Activated CD4-positive, alpha-beta T cell treated with anti-CD3 and anti-CD28 coated beads for 36 hours (primary cell): ENCODE measurements at regions of chr10 and their contacts with region 1.

Region 1: DNA sequence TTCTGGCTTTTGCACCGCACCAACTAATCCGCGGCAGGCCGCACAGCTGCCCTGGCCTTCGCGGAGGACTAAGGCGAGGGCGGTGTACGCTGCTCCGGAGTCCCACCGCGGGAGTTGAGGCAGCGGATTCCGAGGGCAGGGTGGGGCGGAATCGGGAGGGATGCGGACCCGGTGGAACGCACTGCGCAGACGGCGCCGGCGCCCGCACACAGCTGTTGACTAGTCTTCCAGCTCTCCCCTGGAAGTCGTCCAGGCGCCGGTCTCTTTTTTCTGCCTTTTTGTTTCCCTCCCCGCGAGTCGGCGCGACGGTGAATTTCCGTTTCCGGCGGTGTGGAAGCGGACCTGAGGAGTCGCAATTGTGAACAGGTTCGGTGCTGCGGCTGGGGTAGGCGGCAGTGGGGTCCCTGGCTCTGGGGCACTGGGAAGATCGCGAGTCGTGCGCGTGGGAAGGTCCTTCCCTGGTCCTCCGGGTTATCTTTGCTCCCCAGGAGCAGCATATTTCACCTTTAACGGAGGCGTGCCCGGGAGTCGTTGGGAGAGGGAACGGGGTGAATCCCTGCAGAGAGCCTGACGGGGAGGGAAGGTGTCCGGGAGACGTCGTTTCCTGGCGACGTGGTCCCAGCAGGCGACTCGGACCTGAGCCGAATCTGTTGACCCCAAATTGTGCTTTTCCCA is at the start of gene ASAH2B:
- DNase-seq: peak; percentile 88
- ATAC-seq: peak; percentile 87
- H3K4me3 Mint-ChIP-seq: peak within 1 kb of the TSS; percentile 99
- H3K27ac Mint-ChIP-seq: peak within 1 kb of the TSS; percentile 97
- H3K4me1 Mint-ChIP-seq: peaks cover 15% of the 10 kb centered on the region
- H3K27me3 Mint-ChIP-seq: peaks cover 1% of the 10 kb centered on the region
- total RNA-seq, gene ASAH2B: 5.9 to 10.3 TPM

Region 2: DNA sequence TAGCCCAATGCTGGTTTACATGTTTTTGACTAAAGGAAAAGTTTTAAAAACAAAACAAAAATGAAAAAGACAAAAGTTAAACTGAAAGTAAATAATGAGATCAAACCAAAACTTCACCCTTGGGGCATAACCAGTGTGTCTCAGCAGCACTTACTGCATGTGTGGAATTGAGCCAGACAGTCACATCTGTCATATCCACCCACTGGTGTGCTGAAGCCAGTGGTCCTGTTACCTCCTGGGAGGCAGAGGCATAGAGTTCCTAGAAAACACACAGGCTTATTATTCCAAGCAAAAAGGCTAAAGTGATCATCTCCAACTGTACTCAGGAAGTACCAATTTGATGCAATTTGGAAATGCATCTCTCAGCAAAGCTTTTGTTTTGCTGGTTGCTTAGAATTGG is 528.9 kb before region 1 on chr10:
- CTCF ChIA-PET with region 1: no interaction called
- POLR2A ChIA-PET with region 1: no interaction called
- intact Hi-C with region 1: no loop called
- DNase-seq: no peak
- ATAC-seq: no peak
- H3K4me3 Mint-ChIP-seq: no peak overlapping the region
- H3K27ac Mint-ChIP-seq: no peak overlapping the region
- H3K4me1 Mint-ChIP-seq: no peaks in the 10 kb centered on the region
- H3K27me3 Mint-ChIP-seq: peaks cover 14% of the 10 kb centered on the region

Region 3: GRCh38 chr10:50260791-50261281 is 478.9 kb before region 1 on chr10:
- CTCF ChIA-PET with region 1: no interaction called
- POLR2A ChIA-PET with region 1: no interaction called
- intact Hi-C with region 1: no loop called
- DNase-seq: peak; percentile 18
- ATAC-seq: peak; percentile 94
- H3K4me3 Mint-ChIP-seq: no peak overlapping the region
- H3K27ac Mint-ChIP-seq: no peak overlapping the region
- H3K4me1 Mint-ChIP-seq: peaks cover 6% of the 10 kb centered on the region
- H3K27me3 Mint-ChIP-seq: peaks cover 23% of the 10 kb centered on the region

Region 4: GRCh38 chr10:50653142-50653541 is 86.6 kb before region 1 on chr10:
- CTCF ChIA-PET with region 1: no interaction called
- POLR2A ChIA-PET with region 1: no interaction called
- intact Hi-C with region 1: loop called in 1 of 2 experiments (anchors 5 kb)
- DNase-seq: peak; percentile 35
- ATAC-seq: peak; percentile 65
- H3K4me3 Mint-ChIP-seq: no peak overlapping the region
- H3K27ac Mint-ChIP-seq: no peak overlapping the region
- H3K4me1 Mint-ChIP-seq: peaks cover 13% of the 10 kb centered on the region
- H3K27me3 Mint-ChIP-seq: no peaks in the 10 kb centered on the region

Region 5: DNA sequence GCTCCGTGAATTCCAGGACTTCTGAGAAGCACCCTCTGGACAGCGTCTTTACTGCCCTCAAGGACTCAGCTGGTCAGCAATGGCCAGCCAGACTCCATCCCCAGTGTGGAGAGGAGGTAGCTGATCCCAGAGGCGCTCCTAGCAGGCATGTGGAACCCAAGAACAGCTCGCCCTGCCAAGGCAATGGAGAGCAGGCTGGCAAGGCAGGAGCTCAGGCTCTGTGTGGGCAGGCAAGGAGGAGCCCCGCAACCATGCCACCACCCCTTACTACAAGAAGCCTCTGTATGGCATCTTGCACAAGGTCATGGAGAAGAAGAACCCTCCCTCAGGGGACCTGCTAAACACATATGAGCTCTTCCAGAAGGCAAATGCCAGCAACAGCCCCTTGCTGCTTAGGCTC is 81.6 kb before region 1 on chr10:
- CTCF ChIA-PET with region 1: interaction called, 3 read pairs
- POLR2A ChIA-PET with region 1: no interaction called
- intact Hi-C with region 1: loop called in 1 of 2 experiments (anchors 1 kb)
- DNase-seq: no peak
- ATAC-seq: no peak
- H3K4me3 Mint-ChIP-seq: peak overlapping the region; percentile 15
- H3K27ac Mint-ChIP-seq: no peak overlapping the region
- H3K4me1 Mint-ChIP-seq: peaks cover 29% of the 10 kb centered on the region
- H3K27me3 Mint-ChIP-seq: no peaks in the 10 kb centered on the region

Region 6: GRCh38 chr10:50824782-50825181 is 85.0 kb after region 1 on chr10:
- CTCF ChIA-PET with region 1: no interaction called
- POLR2A ChIA-PET with region 1: no interaction called
- intact Hi-C with region 1: no loop called
- DNase-seq: no peak
- ATAC-seq: no peak
- H3K4me3 Mint-ChIP-seq: no peak overlapping the region
- H3K27ac Mint-ChIP-seq: no peak overlapping the region
- H3K4me1 Mint-ChIP-seq: no peaks in the 10 kb centered on the region
- H3K27me3 Mint-ChIP-seq: peaks cover 18% of the 10 kb centered on the region

Region 7: DNA sequence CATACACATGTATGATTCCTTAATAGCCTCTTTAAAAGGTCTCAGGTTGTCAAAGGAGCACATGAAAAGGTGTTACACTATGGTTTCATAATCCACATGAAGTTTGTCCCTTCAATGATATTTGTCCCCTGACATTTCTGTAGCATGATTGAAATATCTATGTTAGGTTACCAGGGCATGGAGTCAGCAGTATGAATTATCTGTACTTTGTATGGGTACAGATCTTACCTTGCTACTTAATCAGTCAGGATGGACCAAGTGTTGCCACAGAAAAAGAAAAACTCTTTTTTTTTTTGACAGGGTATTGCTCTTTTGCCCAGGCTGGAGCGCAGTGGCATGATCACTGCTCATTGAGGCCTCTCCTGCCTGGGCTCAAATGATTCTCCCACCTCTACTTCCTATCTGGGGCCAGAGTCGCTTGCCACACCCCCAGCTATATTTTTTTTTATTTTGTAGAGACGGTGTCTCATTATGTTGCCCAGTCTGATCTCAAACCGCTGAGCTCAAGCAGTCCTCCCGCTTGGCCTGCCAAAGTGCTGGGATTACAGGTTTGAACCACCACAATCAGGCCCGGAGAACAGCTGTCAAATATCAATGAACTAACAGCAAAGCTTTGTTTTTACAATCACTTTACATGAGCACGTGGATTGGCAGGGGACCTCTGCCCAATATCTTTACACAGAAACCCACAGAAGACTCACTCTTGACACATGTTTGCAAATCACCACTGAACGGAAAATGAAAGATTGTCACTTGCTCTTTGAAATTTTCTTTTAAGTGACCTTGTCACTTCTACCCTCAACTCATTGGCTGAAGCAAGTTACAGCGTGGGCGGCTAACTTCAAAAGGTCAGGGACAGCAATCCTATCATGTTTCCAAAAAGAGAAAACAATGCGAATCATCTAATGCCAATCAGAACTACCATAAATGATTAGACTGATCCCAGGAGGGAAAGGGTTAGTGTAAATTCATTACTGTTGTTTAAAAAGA is 474.7 kb after region 1 on chr10:
- CTCF ChIA-PET with region 1: no interaction called
- POLR2A ChIA-PET with region 1: no interaction called
- intact Hi-C with region 1: no loop called
- DNase-seq: no peak
- ATAC-seq: no peak
- H3K4me3 Mint-ChIP-seq: no peak overlapping the region
- H3K27ac Mint-ChIP-seq: no peak overlapping the region
- H3K4me1 Mint-ChIP-seq: no peaks in the 10 kb centered on the region
- H3K27me3 Mint-ChIP-seq: no peaks in the 10 kb centered on the region

Region 8: DNA sequence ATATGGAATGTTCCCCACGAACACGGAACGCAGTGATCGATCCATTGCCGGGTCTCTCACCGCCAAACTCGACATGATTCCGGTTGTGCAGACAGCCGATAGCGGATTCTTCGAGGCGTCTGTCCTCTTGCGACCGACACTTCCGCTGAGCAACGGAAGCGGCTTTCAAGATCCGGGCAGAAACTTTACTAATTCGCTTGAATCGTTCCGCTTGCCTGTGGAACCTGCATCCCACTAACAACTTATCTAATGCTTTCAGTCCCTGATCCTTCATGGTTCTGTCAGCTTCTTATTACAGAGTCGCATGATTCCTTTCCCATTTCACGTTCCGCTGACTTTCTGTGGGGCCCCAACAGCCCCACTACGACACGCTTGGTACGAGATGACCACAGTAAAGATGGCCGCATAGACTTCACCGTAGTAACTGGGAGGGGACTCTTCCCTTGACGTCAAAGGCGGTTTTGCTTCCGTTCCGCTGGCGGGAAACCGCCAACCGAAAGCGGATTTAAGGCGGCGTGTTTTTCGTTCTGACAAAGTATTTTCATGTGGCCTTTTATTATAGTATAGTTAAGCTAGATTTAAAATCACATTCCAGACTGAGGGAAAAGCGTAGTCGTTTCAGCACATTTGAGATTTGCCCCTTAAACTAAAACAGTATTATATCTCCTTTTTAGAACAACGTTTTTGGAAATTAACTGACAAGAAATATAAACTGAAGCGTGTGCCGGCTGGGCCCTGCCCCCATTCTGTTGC is 959.9 kb after region 1 on chr10 and contains the start of gene CSTF2T:
- CTCF ChIA-PET with region 1: no interaction called
- POLR2A ChIA-PET with region 1: no interaction called
- intact Hi-C with region 1: loop called in 1 of 2 experiments (anchors 5 kb)
- DNase-seq: peak; percentile 93
- ATAC-seq: peak; percentile 89
- H3K4me3 Mint-ChIP-seq: peak within 1 kb of the TSS; percentile 96
- H3K27ac Mint-ChIP-seq: peak within 1 kb of the TSS; percentile 100
- H3K4me1 Mint-ChIP-seq: peaks cover 51% of the 10 kb centered on the region
- H3K27me3 Mint-ChIP-seq: no peaks in the 10 kb centered on the region
- total RNA-seq, gene CSTF2T: 24.5 to 27.6 TPM